PC-9 (cell line): ENCODE measurements at regions of chr20 and their contacts with region 1.

Region 1: GRCh38 chr20:53939572-53940359 is 130.6 kb downstream of the BCAS1 start:
- DNase-seq: peak; percentile 89 to 90
- H3K4me3 ChIP-seq: no peak overlapping the region
- H3K27ac ChIP-seq: peak overlapping the region; percentile 65
- H3K4me1 ChIP-seq: peaks cover 26% of the 10 kb centered on the region
- H3K27me3 ChIP-seq: no peaks in the 10 kb centered on the region
- CTCF ChIP-seq: peak; percentile 96

Region 2: GRCh38 chr20:52312132-52312729 is 1627.5 kb before region 1 on chr20:
- CTCF ChIA-PET with region 1: no interaction called
- POLR2A ChIA-PET with region 1: no interaction called
- intact Hi-C with region 1: loop called (anchors 2 kb)
- DNase-seq: peak; percentile 35 to 51
- H3K4me3 ChIP-seq: no peak overlapping the region
- H3K27ac ChIP-seq: no peak overlapping the region
- H3K4me1 ChIP-seq: no peaks in the 10 kb centered on the region
- H3K27me3 ChIP-seq: peaks cover 71% of the 10 kb centered on the region
- CTCF ChIP-seq: peak; percentile 87

Region 3: DNA sequence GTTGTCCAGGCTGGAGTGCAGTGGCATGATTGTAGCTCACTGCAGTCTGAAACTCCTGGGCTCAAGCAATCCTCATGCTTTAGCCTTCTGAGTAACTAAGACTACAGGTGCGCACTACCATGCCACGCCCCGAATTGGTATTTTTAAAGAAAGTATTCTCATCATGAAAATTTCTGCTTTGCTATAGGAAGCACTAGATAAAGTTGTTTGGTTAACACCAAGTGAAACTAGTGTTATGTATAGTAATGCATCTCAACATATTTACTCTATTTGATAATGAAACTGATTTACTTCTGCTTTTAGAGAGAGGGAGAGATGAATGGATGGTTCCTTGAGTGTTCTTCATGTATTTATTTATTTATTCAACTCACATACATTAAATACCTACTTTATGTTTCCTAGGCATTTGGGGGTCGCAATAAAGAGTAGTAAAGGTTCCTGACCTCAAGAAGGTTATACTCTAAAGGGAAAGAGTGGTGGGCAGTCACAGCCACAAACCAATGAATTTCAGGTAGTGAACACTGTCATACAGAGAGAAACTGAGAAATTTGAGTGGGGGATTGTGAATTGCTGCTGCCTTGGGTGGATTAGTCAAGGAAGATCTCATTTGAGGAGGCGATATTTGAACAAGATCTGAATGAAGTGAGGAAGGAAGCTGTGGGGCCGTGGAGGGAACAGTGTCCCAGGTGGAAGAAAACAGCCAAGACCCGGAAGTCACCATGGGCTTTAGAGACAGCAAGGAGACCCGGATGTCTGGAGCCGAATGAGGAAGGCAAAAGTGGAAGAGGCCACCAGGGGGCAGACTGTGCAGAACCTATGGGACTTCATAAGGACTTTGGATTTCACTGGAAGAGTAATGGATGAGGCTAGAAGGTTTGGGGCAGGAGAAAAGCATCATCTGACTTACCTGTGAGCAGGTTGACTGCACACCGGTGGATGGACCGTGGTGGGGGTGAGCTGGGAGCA is 782.0 kb before region 1 on chr20:
- CTCF ChIA-PET with region 1: no interaction called
- POLR2A ChIA-PET with region 1: no interaction called
- intact Hi-C with region 1: loop called (anchors 5 kb)
- DNase-seq: peak in 1 of 2 experiments; percentile 31
- H3K4me3 ChIP-seq: no peak overlapping the region
- H3K27ac ChIP-seq: no peak overlapping the region
- H3K4me1 ChIP-seq: no peaks in the 10 kb centered on the region
- H3K27me3 ChIP-seq: no peaks in the 10 kb centered on the region
- CTCF ChIP-seq: peak; percentile 69

Region 4: GRCh38 chr20:53413186-53413631 is 526.6 kb before region 1 on chr20:
- CTCF ChIA-PET with region 1: interaction called, 5 read pairs
- POLR2A ChIA-PET with region 1: no interaction called
- intact Hi-C with region 1: loop called (anchors 2 kb)
- DNase-seq: peak; percentile 52 to 63
- H3K4me3 ChIP-seq: no peak overlapping the region
- H3K27ac ChIP-seq: no peak overlapping the region
- H3K4me1 ChIP-seq: no peaks in the 10 kb centered on the region
- H3K27me3 ChIP-seq: peaks cover 45% of the 10 kb centered on the region
- CTCF ChIP-seq: peak; percentile 52

Region 5: DNA sequence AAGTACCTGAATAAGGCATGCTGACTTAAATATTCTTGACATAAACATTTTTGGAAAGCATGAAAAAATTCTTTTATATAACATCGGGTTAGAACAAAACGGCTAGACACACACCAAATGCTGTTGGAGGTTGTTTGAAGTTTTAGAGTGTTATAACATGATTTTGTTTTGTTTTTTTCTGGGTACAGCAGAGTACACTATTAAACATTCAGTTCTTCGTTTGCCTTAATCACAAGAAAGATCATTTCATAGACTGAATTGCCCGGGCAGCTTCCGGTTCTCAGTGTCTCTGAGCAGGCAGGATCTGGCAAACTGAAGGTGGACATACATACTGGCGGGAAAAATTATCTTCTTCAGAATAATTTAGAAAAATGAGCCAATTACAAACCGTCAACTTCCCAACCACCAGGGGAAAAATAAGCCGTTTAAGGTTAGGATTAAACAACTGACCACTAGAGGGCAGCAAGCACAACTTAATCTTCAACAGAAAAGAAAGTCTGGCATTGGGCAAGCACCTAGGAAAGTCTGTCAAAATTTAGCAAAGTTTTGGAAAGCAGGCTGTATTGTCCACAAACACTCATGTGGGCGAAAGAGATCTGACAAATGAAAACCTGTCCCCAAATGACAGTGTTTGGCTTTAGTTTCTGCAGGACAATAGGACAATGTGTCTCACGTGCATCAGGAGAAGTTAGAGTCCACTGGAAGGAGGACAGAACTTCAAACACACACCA is 361.1 kb before region 1 on chr20:
- CTCF ChIA-PET with region 1: interaction called, 11 read pairs
- POLR2A ChIA-PET with region 1: no interaction called
- intact Hi-C with region 1: loop called (anchors 1 kb)
- DNase-seq: peak; percentile 61 to 77
- H3K4me3 ChIP-seq: peak overlapping the region; percentile 49
- H3K27ac ChIP-seq: peak overlapping the region; percentile 91
- H3K4me1 ChIP-seq: peaks cover 64% of the 10 kb centered on the region
- H3K27me3 ChIP-seq: no peaks in the 10 kb centered on the region
- CTCF ChIP-seq: peak; percentile 96

Region 6: GRCh38 chr20:54397292-54398154 is 457.8 kb after region 1 on chr20:
- CTCF ChIA-PET with region 1: no interaction called
- POLR2A ChIA-PET with region 1: no interaction called
- intact Hi-C with region 1: no loop called
- DNase-seq: no peak
- H3K4me3 ChIP-seq: no peak overlapping the region
- H3K27ac ChIP-seq: no peak overlapping the region
- H3K4me1 ChIP-seq: no peaks in the 10 kb centered on the region
- H3K27me3 ChIP-seq: no peaks in the 10 kb centered on the region
- CTCF ChIP-seq: no peak